ENCODE measurements at regions of chr16 and their contacts with region 1.

Region 1: DNA sequence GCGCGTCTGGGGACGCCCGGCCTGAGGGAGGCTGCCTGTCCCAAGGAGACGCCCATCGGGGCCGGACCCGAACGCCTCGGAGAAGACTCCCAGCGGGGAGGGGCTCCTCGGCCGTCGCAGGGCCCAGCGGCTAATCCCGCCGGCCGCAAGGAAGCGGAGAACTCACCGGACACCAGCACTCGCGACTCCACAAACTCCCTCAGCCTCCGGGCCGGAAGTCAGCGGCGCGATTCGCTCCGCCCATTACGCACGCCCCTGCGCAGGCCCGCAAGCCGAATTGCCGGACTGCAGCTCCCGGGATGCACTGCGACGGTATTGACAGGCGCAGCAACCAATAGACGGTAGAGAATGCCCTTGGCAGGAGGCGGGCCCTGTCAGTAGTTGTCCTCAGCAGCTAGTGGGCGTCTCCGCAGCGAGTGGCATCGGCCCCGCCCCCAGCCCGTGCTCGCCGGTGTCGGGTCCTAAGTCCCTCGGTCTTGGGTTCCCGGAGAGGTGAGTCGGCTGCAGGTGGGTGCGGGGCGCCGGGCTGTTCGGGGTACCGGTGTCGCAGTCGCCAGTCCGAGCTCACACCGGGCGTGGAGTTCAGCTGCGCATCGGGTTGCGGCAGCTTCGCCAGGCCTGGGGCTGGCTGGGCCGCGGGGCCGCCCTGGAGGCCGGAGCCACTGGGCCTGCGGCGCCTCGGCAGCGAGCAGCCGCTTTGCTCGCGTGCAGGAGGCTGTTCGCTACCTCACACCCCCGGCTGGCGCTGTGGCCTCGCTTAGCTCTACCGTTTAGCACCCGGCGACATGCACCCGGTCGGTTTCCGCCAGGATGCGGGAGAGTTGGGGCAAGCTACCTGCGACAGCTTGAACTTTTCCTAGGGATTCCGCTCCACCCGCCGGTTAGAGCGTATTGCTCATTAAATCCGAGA is at the starts of genes ZNF174 and ZSCAN32:
- DNase-seq: peak; percentile 90 to 99 (median 98)
- ATAC-seq: peak; percentile 99
- H3K4me3 ChIP-seq: peak within 1 kb of the TSS; percentile 87
- H3K4me3 Mint-ChIP-seq: peak within 1 kb of the TSS; percentile 84 to 97 (median 94)
- H3K27ac ChIP-seq: peak within 1 kb of the TSS; percentile 89
- H3K27ac Mint-ChIP-seq: peak within 1 kb of the TSS; percentile 88 to 95 (median 91)
- H3K4me1 ChIP-seq: peaks cover 20 to 22% of the 10 kb centered on the region in 2 donors
- H3K4me1 Mint-ChIP-seq: peaks cover 14 to 77% (median 65%) of the 10 kb centered on the region in 7 donors
- H3K27me3 ChIP-seq: no peaks in the 10 kb centered on the region
- H3K27me3 Mint-ChIP-seq: no peaks in the 10 kb centered on the region
- total RNA-seq, gene ZNF174: 4.7 to 22.8 (median 13.5) TPM
- total RNA-seq, gene ZSCAN32: 9.7 to 31.1 (median 19.0) TPM

Region 2: DNA sequence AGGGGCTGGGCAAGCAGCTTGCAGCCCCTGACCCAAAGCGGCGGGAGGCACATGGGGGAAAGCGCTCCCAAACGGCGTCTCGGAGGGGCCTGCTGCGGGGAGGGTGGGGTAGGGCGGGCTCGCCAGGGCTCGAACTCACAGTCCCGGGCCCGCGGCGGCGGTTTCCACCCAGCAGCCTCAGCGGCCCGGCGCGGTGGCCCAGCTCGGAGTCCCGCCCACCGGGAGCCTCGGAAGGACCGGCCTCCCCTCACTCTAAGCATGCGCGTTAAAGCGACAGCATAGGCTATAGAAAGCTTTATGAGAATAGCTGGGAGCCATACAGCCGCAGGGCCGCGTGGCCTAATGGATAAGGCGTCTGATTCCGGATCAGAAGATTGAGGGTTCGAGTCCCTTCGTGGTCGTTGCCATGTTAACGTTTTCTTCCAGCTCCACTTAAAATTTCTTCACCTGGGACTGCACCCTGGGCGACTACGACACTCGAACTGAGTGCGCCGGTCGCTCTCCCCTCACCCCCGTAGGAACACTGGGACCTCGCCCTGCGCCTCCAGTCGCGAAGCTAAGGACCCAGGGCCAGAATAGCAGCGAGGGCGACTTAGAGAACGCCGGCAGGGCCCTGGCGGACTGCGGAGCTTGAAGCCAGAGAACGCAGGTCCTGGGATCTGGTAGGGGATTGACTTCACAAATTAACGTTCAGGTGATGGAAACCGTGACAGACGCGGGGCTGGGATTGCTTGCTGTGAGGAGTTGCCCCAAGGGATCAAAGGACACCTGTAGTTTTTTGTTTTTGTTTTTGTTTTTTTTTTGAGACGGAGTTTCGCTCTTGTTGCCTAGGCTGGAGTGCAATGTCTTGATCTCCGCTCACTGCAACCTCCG is 250.5 kb before region 1 on chr16:
- CTCF ChIA-PET with region 1: no interaction called
- POLR2A ChIA-PET with region 1: interaction called, 3 read pairs
- intact Hi-C with region 1: loop called in 1 of 2 experiments (anchors 1 kb)
- DNase-seq: peak; percentile 90 to 100 (median 97)
- ATAC-seq: peak; percentile 90
- H3K4me3 ChIP-seq: peak overlapping the region; percentile 73
- H3K4me3 Mint-ChIP-seq: peak overlapping the region; percentile 83 to 93 (median 90)
- H3K27ac ChIP-seq: peak overlapping the region; percentile 71
- H3K27ac Mint-ChIP-seq: peak overlapping the region; percentile 85 to 98 (median 94)
- H3K4me1 ChIP-seq: peaks cover 0 to 5% of the 10 kb centered on the region in 2 donors
- H3K4me1 Mint-ChIP-seq: peaks cover 11 to 42% (median 22%) of the 10 kb centered on the region in 7 donors
- H3K27me3 ChIP-seq: no peaks in the 10 kb centered on the region
- H3K27me3 Mint-ChIP-seq: peaks cover 0 to 25% (median 0%) of the 10 kb centered on the region in 5 donors

Region 3: GRCh38 chr16:3214904-3215600 is 186.0 kb before region 1 on chr16:
- CTCF ChIA-PET with region 1: interaction called, 4 read pairs
- POLR2A ChIA-PET with region 1: no interaction called
- intact Hi-C with region 1: loop called in 1 of 2 experiments (anchors 1 kb)
- DNase-seq: peak in 7 of 9 donors; percentile 75 to 91 (median 87)
- ATAC-seq: peak; percentile 95
- H3K4me3 ChIP-seq: peak overlapping the region; percentile 38
- H3K4me3 Mint-ChIP-seq: peak overlapping the region; percentile 69 to 88 (median 76)
- H3K27ac ChIP-seq: peak overlapping the region; percentile 75
- H3K27ac Mint-ChIP-seq: peak overlapping the region; percentile 96 to 100 (median 99)
- H3K4me1 ChIP-seq: peaks cover 24 to 30% of the 10 kb centered on the region in 2 donors
- H3K4me1 Mint-ChIP-seq: peaks cover 30 to 51% (median 39%) of the 10 kb centered on the region in 7 donors
- H3K27me3 ChIP-seq: no peaks in the 10 kb centered on the region
- H3K27me3 Mint-ChIP-seq: no peaks in the 10 kb centered on the region

Region 4: GRCh38 chr16:3305109-3306068 is 95.6 kb before region 1 on chr16 and contains the starts of genes TIGD7 and ZNF75A:
- CTCF ChIA-PET with region 1: no interaction called
- POLR2A ChIA-PET with region 1: interaction called, 7 read pairs
- intact Hi-C with region 1: loop called (anchors 1 kb)
- DNase-seq: peak; percentile 69 to 89 (median 85)
- ATAC-seq: peak; percentile 96
- H3K4me3 ChIP-seq: peak within 1 kb of the TSS; percentile 78
- H3K4me3 Mint-ChIP-seq: peak within 1 kb of the TSS; percentile 78 to 87 (median 84)
- H3K27ac ChIP-seq: peak within 1 kb of the TSS; percentile 87
- H3K27ac Mint-ChIP-seq: peak within 1 kb of the TSS; percentile 62 to 92 (median 83)
- H3K4me1 ChIP-seq: peaks cover 12 to 13% of the 10 kb centered on the region in 2 donors
- H3K4me1 Mint-ChIP-seq: peaks cover 4 to 38% (median 19%) of the 10 kb centered on the region in 7 donors
- H3K27me3 ChIP-seq: no peaks in the 10 kb centered on the region
- H3K27me3 Mint-ChIP-seq: no peaks in the 10 kb centered on the region
- total RNA-seq, gene TIGD7: 4.9 to 18.4 (median 5.5) TPM
- total RNA-seq, gene ZNF75A: 27.7 to 90.6 (median 53.4) TPM

Region 5: GRCh38 chr16:3443108-3444031 is 42.3 kb after region 1 on chr16 and contains the starts of genes NAA60 and ZNF597:
- CTCF ChIA-PET with region 1: interaction called, 4 read pairs
- POLR2A ChIA-PET with region 1: interaction called, 25 read pairs
- intact Hi-C with region 1: loop called (anchors 1 to 2 kb)
- DNase-seq: peak; percentile 38 to 86 (median 79)
- ATAC-seq: peak; percentile 96
- H3K4me3 ChIP-seq: peak within 1 kb of the TSS; percentile 47
- H3K4me3 Mint-ChIP-seq: peak within 1 kb of the TSS; percentile 88 to 100 (median 96)
- H3K27ac ChIP-seq: peak within 1 kb of the TSS; percentile 89
- H3K27ac Mint-ChIP-seq: peak within 1 kb of the TSS; percentile 82 to 98 (median 96)
- H3K4me1 ChIP-seq: peaks cover 5 to 15% of the 10 kb centered on the region in 2 donors
- H3K4me1 Mint-ChIP-seq: peaks cover 0 to 46% (median 24%) of the 10 kb centered on the region in 7 donors
- H3K27me3 ChIP-seq: no peaks in the 10 kb centered on the region
- H3K27me3 Mint-ChIP-seq: peaks cover 0 to 5% (median 0%) of the 10 kb centered on the region in 5 donors
- total RNA-seq, gene NAA60: 38.7 to 63.7 (median 55.3) TPM
- total RNA-seq, gene ZNF597: 2.2 to 5.9 (median 3.8) TPM

Region 6: DNA sequence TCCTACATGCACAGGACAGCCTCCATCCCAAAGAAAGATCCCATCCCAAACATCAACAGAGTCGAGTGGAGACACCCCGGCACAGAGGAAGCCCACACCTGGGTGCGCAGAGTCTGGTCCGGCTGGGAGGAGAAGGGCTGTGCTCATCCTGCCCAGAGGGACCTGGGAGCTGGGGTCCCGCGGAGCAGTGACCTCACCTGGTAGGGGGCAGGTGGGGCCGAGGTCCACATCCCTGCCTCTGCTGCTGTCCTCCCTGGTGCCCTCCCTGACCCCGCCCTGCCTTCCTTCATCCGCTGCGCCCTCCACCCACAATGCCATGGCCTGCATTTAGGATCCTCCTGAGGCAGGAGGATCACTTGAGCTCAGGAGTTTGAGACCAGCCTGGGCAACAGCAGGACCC is 91.3 kb after region 1 on chr16:
- CTCF ChIA-PET with region 1: no interaction called
- POLR2A ChIA-PET with region 1: no interaction called
- intact Hi-C with region 1: no loop called
- DNase-seq: no peak
- ATAC-seq: no peak
- H3K4me3 ChIP-seq: no peak overlapping the region
- H3K4me3 Mint-ChIP-seq: no peak overlapping the region
- H3K27ac ChIP-seq: no peak overlapping the region
- H3K27ac Mint-ChIP-seq: no peak overlapping the region
- H3K4me1 ChIP-seq: no peaks in the 10 kb centered on the region
- H3K4me1 Mint-ChIP-seq: peaks cover 0 to 9% (median 5%) of the 10 kb centered on the region in 7 donors
- H3K27me3 ChIP-seq: no peaks in the 10 kb centered on the region
- H3K27me3 Mint-ChIP-seq: no peaks in the 10 kb centered on the region

Region 7: GRCh38 chr16:3503523-3503922 is 102.5 kb after region 1 on chr16:
- CTCF ChIA-PET with region 1: interaction called, 3 read pairs
- POLR2A ChIA-PET with region 1: interaction called, 6 read pairs
- intact Hi-C with region 1: loop called (anchors 1 kb)
- DNase-seq: peak in 8 of 9 donors; percentile 50 to 81 (median 70)
- ATAC-seq: peak; percentile 49
- H3K4me3 ChIP-seq: peak overlapping the region; percentile 3
- H3K4me3 Mint-ChIP-seq: peak overlapping the region; percentile 76 to 94 (median 84)
- H3K27ac ChIP-seq: peak overlapping the region; percentile 92
- H3K27ac Mint-ChIP-seq: peak overlapping the region; percentile 90 to 98 (median 95)
- H3K4me1 ChIP-seq: peaks cover 40 to 47% of the 10 kb centered on the region in 2 donors
- H3K4me1 Mint-ChIP-seq: peaks cover 37 to 80% (median 67%) of the 10 kb centered on the region in 7 donors
- H3K27me3 ChIP-seq: no peaks in the 10 kb centered on the region
- H3K27me3 Mint-ChIP-seq: no peaks in the 10 kb centered on the region

Region 8: DNA sequence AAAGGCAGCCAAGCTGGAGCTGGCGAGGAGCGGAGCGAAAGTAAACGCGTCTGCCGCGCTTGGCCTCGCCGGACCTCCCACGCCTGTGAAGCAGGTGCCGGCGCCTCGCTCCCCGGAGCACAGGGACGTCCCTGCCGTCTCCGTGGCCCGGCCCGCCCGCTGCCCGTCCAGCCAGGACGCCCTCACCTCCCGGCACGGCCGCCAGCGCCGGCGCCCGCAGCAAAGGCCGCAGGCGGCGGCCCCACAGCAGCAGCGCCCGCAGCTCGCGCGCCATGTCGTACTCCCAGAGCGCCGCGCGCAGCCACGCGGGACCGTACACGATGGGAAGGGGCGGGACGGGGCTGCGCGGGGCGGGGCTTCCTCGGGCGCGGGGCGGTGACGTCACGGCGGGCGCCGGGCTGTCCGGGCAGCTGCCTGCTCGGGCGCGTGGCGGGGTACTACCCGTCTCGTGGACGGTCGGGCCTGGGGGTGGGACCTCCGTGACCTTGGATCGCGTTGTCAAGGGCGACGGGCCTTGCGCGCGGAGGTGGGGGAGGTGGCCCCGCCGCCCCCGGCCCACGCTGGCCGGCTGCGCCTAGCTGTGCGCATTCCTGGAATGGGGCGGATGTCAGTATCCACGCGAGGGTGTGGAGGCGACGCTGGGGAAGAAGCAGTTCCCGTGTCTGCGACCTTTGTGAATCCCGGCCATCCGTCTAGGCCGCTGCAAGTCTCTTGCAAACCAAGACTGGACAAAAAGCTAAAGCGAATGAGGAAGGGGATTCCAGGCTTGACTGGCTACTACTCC is 316.4 kb after region 1 on chr16 and contains the start of gene TRAP1:
- CTCF ChIA-PET with region 1: no interaction called
- POLR2A ChIA-PET with region 1: no interaction called
- intact Hi-C with region 1: loop called in 1 of 2 experiments (anchors 2 kb)
- DNase-seq: peak; percentile 81 to 96 (median 88)
- ATAC-seq: peak; percentile 98
- H3K4me3 ChIP-seq: peak within 1 kb of the TSS; percentile 67
- H3K4me3 Mint-ChIP-seq: peak within 1 kb of the TSS; percentile 81 to 94 (median 89)
- H3K27ac ChIP-seq: peak within 1 kb of the TSS; percentile 94
- H3K27ac Mint-ChIP-seq: peak within 1 kb of the TSS; percentile 67 to 96 (median 92)
- H3K4me1 ChIP-seq: peaks cover 6 to 11% of the 10 kb centered on the region in 2 donors
- H3K4me1 Mint-ChIP-seq: peaks cover 14 to 47% (median 38%) of the 10 kb centered on the region in 7 donors
- H3K27me3 ChIP-seq: no peaks in the 10 kb centered on the region
- H3K27me3 Mint-ChIP-seq: no peaks in the 10 kb centered on the region
- total RNA-seq, gene TRAP1: 96.8 to 138 (median 132) TPM